PC-3 (cell line): ENCODE measurements at regions of chr7 and their contacts with region 1.

Region 1: DNA sequence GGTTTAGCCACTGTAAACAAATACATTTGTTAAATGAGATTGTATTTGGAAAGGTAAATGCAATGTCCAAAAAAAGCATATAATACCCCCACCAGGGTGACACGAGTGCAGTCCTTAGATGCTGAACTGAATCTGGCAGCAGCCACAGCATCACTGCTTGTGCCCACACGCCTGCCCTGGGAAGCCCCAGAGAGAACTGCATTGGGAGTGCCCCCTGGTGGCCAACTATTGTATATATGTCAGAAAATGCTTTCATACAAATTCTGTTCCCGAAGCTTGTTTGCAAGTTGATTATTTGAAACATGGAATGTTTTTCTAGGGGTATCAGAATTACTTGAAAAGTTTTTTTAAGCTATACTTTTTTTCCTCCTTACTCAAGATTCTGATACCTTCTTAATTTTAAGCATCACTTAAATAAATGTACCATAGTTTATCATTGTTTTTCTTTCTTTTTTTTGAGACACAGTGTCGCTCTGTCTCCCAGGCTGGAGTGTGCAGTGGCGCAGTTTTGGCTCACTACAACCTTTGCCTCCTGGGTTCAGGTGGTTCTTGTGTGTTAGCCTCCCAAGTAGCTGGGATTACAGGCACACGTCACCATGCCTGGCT is 50.1 kb downstream of the LANCL2 start:
- DNase-seq: peak; percentile 82
- ATAC-seq: peak; percentile 92
- H3K4me3 ChIP-seq: no peak overlapping the region
- H3K27ac ChIP-seq: no peak overlapping the region
- H3K4me1 ChIP-seq: peaks cover under 1% of the 10 kb centered on the region; the same call in 1 of the 2 replicates
- H3K27me3 ChIP-seq: no peaks in the 10 kb centered on the region
- CTCF ChIP-seq: peak; percentile 82

Region 2: GRCh38 chr7:54773472-54774399 is 641.5 kb before region 1 on chr7:
- CTCF ChIA-PET with region 1: no interaction called
- POLR2A ChIA-PET with region 1: no interaction called
- intact Hi-C with region 1: loop called (anchors 2 kb)
- DNase-seq: peak; percentile 94
- ATAC-seq: peak; percentile 88
- H3K4me3 ChIP-seq: peak overlapping the region; percentile 67
- H3K27ac ChIP-seq: peak overlapping the region; percentile 54
- H3K4me1 ChIP-seq: peaks cover 21% of the 10 kb centered on the region
- H3K27me3 ChIP-seq: no peaks in the 10 kb centered on the region
- CTCF ChIP-seq: peak; percentile 86

Region 3: GRCh38 chr7:55280031-55280454 is 135.2 kb before region 1 on chr7:
- CTCF ChIA-PET with region 1: interaction called, 4 read pairs
- POLR2A ChIA-PET with region 1: no interaction called
- intact Hi-C with region 1: loop called (anchors 1 kb)
- DNase-seq: peak; percentile 83
- ATAC-seq: peak; percentile 94
- H3K4me3 ChIP-seq: no peak overlapping the region
- H3K27ac ChIP-seq: no peak overlapping the region
- H3K4me1 ChIP-seq: no peaks in the 10 kb centered on the region
- H3K27me3 ChIP-seq: no peaks in the 10 kb centered on the region
- CTCF ChIP-seq: peak; percentile 81